ENCODE measurements at regions of chr15 and their contacts with region 1.

Region 1: GRCh38 chr15:78131295-78132061 is at the start of gene CIB2:
- DNase-seq: peak; percentile 46 to 89 (median 72)
- ATAC-seq: peak; percentile 89
- H3K4me3 ChIP-seq: peak within 1 kb of the TSS; percentile 91
- H3K4me3 Mint-ChIP-seq: peak within 1 kb of the TSS; percentile 89
- H3K27ac ChIP-seq: peak within 1 kb of the TSS; percentile 39 to 86
- H3K27ac Mint-ChIP-seq: peak within 1 kb of the TSS; percentile 73
- H3K4me1 ChIP-seq: peaks cover 18% of the 10 kb centered on the region
- H3K4me1 Mint-ChIP-seq: peaks cover 27% of the 10 kb centered on the region
- H3K27me3 ChIP-seq: no peaks in the 10 kb centered on the region
- H3K27me3 Mint-ChIP-seq: no peaks in the 10 kb centered on the region
- CTCF ChIP-seq: peak; percentile 66
- total RNA-seq, gene CIB2: 0.82 to 1.7 TPM

Region 2: DNA sequence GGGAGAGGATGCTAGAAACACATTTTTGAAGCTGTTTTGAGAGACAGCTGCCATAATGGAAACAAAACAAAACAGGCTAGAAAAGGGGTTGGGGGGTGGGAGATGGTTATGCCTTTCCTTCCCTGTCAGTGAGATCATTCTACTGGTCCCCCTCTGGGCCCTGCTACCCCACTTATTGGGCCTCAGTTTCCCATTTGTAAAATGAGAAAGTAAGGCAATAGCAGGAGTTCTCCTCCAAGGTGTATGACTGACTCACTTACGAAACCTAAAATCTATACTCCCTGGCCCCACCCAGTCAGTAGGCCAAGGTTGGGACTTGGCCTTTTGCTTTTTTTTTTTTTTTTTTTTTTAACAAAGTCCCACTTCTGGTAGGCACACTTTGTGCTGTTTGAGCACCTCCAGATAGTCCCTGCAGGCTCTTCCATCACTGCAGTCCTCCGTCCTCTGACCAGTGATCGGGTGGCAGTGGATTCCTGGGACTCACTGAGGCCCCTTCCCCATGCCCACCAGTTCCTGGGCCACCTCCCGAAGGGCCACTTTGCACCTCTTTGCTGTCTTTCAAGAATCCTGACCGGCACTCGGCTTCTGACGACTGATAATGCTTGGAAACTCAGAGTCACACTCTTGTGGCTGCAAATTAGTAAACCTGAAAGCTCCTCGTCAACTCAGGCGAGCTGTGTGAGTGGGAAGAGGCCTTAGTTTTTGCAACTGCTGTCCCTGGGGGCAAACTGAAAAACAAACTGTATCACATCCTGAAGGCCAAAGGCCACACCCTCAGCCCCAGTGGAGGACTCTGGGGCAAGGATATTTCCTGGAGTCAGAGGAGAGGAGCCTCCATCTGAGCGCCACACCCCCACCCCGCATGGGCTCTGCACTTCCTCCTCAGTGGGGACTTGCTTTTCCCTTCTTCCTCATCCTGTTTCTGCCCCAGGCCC is 1143.3 kb before region 1 on chr15:
- CTCF ChIA-PET with region 1: no interaction called
- POLR2A ChIA-PET with region 1: no interaction called
- intact Hi-C with region 1: no loop called
- DNase-seq: no peak
- ATAC-seq: peak; percentile 39
- H3K4me3 ChIP-seq: no peak overlapping the region
- H3K4me3 Mint-ChIP-seq: no peak overlapping the region
- H3K27ac ChIP-seq: peak overlapping the region in 1 of 2 donors; percentile 23
- H3K27ac Mint-ChIP-seq: peak overlapping the region; percentile 23
- H3K4me1 ChIP-seq: peaks cover 40% of the 10 kb centered on the region
- H3K4me1 Mint-ChIP-seq: peaks cover 28% of the 10 kb centered on the region
- H3K27me3 ChIP-seq: no peaks in the 10 kb centered on the region
- H3K27me3 Mint-ChIP-seq: no peaks in the 10 kb centered on the region
- CTCF ChIP-seq: no peak

Region 3: DNA sequence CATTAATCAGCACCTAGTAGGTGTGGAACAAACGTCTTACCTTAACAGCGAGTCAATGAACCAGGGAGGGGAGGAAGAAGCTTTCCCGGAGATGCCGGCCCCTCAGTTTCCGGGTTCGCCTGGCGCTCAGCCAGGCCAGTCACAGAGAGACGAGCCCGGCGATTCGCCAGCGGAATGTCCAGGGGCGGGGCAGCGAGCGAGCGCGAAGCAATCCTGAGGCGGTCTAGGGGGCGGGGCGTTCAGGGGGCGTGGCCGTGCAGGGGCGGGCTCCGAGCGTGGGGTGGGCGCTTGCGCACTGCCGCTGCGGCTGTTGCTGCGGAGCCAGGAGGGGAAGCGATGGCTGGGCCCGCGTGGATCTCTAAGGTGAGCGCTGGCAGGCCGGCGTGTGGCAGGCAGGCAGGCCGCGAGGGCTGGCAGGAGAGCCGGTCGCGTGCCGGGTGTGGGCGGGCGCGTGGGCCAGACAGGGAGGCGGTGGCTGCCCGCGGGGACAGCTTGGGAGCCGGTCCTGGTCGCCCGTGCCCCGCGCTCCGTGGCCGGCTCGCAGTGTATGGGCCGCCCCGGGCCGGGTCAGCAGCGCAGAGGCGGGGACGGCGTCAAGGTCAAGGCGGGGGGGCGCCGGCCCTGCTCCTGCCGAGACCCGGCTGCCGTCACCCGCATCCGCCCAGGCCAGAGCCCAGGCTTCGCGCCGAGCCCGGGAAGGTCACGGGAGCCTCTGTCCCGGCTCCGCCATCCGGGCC is 17.8 kb after region 1 on chr15 and contains the start of gene IDH3A:
- CTCF ChIA-PET with region 1: interaction called, 7 read pairs
- POLR2A ChIA-PET with region 1: interaction called, 27 read pairs
- intact Hi-C with region 1: loop called (anchors 1 kb)
- DNase-seq: peak; percentile 99 to 100 (median 100)
- ATAC-seq: peak; percentile 94
- H3K4me3 ChIP-seq: peak within 1 kb of the TSS; percentile 69
- H3K4me3 Mint-ChIP-seq: peak within 1 kb of the TSS; percentile 97
- H3K27ac ChIP-seq: peak within 1 kb of the TSS in 1 of 2 donors; percentile 29
- H3K27ac Mint-ChIP-seq: peak within 1 kb of the TSS; percentile 91
- H3K4me1 ChIP-seq: peaks cover 27% of the 10 kb centered on the region
- H3K4me1 Mint-ChIP-seq: peaks cover 45% of the 10 kb centered on the region
- H3K27me3 ChIP-seq: no peaks in the 10 kb centered on the region
- H3K27me3 Mint-ChIP-seq: no peaks in the 10 kb centered on the region
- CTCF ChIP-seq: no peak
- total RNA-seq, gene IDH3A: 47.5 to 47.6 TPM

Region 4: GRCh38 chr15:78195735-78196201 is 64.3 kb after region 1 on chr15:
- CTCF ChIA-PET with region 1: interaction called, 7 read pairs
- POLR2A ChIA-PET with region 1: interaction called, 4 read pairs
- intact Hi-C with region 1: loop called (anchors 1 kb)
- DNase-seq: peak; percentile 17 to 75 (median 39)
- ATAC-seq: peak; percentile 86
- H3K4me3 ChIP-seq: no peak overlapping the region
- H3K4me3 Mint-ChIP-seq: no peak overlapping the region
- H3K27ac ChIP-seq: no peak overlapping the region
- H3K27ac Mint-ChIP-seq: no peak overlapping the region
- H3K4me1 ChIP-seq: peaks cover 4% of the 10 kb centered on the region
- H3K4me1 Mint-ChIP-seq: no peaks in the 10 kb centered on the region
- H3K27me3 ChIP-seq: no peaks in the 10 kb centered on the region
- H3K27me3 Mint-ChIP-seq: no peaks in the 10 kb centered on the region
- CTCF ChIP-seq: peak; percentile 81

Region 5: DNA sequence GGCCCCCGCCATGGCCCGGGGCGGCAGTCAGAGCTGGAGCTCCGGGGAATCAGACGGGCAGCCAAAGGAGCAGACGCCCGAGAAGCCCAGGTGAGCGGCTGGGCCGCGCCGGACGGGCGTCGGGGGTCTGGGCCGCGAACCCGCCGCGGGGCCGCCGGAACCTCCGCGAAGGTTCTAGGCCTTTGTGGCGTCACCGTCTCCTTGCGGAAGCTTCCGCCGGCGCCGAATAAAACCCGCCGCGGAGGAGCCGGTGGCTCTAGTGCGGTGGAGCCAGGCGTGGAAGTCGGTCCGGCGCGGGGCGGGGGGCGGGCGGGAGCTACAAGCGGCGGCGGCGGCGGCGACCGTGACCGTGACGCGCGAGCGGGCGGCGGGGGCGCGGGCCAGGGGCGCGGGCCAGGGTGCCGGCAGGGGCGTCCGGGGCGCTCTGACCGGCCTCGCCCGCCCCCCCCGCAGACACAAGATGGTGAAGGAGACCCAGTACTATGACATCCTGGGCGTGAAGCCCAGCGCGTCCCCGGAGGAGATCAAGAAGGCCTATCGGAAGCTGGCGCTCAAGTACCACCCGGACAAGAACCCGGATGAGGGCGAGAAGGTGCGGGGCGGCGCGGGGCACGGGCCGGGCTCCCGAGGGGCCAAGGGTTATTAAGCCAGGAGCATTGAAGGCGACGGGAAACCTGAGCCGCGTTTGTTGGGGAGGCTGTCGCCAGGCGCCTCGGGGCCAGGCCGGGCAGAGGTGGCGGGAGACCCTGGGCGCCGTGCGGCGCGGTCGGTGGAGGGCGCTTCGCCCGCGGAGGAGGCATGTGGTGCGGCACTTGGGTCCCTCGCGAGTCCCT is 133.0 kb after region 1 on chr15 and contains the start of gene DNAJA4:
- CTCF ChIA-PET with region 1: no interaction called
- POLR2A ChIA-PET with region 1: interaction called, 14 read pairs
- intact Hi-C with region 1: no loop called
- DNase-seq: peak; percentile 39 to 86 (median 61)
- ATAC-seq: peak; percentile 77
- H3K4me3 ChIP-seq: peak within 1 kb of the TSS; percentile 70
- H3K4me3 Mint-ChIP-seq: peak within 1 kb of the TSS; percentile 89
- H3K27ac ChIP-seq: peak within 1 kb of the TSS; percentile 54 to 62
- H3K27ac Mint-ChIP-seq: peak within 1 kb of the TSS; percentile 94
- H3K4me1 ChIP-seq: peaks cover 27% of the 10 kb centered on the region
- H3K4me1 Mint-ChIP-seq: peaks cover 36% of the 10 kb centered on the region
- H3K27me3 ChIP-seq: no peaks in the 10 kb centered on the region
- H3K27me3 Mint-ChIP-seq: no peaks in the 10 kb centered on the region
- CTCF ChIP-seq: peak; percentile 27
- total RNA-seq, gene DNAJA4: 47.0 to 48.5 TPM

Measured in CD4-positive, alpha-beta T cell (primary cell).